AG04449 (cell line): ENCODE measurements at regions of chr6 and their contacts with region 1.

Region 1: DNA sequence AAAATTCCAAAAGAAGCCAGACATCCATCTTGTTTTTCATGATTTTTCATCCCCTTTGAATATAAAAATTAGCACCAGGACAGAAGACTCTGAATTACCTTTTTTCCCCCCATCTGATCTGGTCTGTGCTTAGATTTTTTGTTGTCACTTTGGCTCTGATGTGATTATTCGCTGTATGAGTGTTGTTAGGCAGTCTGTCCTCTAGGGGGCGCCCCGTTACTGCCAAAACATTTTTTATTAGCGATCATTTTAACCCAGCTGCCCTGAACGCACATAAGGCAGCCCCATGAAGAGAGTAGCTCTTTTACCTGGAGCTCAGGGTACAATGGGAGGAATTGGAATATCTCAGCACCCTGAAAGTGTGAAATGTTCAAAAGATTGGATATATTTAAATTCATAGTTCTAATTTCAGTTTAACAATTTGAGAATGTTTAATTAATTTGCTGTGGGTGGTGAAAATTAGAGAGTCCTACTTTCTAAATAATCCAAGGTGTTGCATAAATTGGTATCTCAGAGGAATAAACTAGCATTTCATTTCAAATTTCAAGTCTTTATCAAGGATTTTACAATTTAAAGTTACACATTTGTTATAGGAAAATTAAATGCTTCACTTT is 60.8 kb downstream of the PRPH2 start:
- DNase-seq: peak; percentile 3
- H3K4me3 ChIP-seq: no peak overlapping the region
- CTCF ChIP-seq: peak; percentile 70

Region 2: DNA sequence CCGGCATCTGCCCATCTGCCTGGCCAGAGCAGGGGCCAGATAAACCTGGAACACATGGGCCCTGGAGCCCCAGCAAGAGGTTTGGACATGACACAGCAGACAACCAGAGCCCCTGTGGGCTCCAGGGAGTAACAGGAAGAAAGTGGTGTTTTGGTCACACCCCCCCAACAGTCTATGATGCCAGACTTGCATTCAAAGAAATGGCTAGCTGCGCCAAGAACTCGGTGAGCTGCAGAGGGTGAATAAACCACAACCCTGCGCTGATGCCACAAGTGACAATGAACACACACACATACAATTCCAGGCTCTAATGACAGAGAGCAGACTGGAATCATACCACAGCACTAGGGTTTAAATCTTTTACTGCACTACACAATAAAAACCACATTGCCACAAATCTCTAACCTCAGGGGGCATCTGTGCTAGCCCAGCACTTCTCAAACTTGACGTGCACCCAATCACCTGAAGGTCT is 244.0 kb before region 1 on chr6:
- CTCF ChIA-PET with region 1: no interaction called
- POLR2A ChIA-PET with region 1: no interaction called
- DNase-seq: no peak
- H3K4me3 ChIP-seq: no peak overlapping the region
- CTCF ChIP-seq: no peak

Region 3: DNA sequence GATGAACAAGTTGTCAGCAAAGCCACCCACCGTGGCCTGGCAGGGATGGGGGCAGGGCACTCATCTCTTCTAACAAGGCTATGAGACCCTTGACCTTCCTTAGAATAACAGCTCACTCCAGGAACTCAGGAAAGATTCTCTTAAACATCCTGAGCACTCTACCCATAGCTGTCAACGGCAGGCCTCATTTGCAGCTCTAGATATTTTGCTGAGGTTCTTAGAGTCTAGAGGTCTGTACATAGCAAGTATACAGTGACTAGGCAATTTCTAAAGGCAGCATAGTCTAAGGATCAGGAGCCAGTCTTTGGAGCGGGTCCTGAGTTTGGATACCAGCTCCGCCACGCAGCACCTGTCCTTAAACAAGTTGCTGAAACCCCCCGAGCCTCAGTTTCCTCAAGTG is 221.6 kb before region 1 on chr6:
- CTCF ChIA-PET with region 1: no interaction called
- POLR2A ChIA-PET with region 1: no interaction called
- DNase-seq: no peak
- H3K4me3 ChIP-seq: no peak overlapping the region
- CTCF ChIP-seq: no peak

Region 4: DNA sequence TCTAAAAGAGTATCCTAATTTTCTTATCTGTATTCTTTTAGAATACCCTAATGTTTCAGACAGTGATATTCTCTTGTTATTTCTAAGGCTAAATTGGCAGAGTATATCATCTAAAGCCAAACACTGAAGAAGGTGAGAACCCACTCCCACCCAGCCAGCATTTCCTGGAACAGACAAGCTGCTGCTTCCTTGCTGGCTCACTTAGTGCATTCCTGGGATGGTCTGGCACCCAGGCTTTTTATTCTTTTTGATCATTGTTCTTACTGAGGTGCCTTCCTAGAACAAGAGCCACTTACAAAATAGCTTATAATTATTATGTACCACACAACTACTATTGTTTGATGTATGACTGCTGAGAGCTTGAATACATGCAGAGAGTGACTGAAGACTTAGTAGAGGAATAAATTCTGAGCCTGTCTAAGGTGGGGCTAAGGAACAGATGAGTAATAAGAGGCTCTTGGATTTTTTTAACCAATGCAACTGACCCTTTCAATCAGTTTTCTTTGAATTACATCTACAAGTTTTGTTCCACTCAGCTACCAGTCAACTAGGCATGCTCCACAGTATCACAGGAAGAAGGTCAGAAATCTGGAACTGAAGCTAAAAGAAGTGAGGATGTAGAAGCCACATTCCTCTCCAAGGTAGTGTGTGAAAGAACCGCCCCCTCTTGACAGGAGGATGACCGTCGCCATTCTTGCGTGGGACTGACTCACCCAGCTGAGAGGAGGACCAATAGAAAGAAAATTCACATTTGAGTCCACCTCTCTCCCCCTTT is 30.7 kb after region 1 on chr6:
- CTCF ChIA-PET with region 1: interaction called, 25 read pairs
- POLR2A ChIA-PET with region 1: no interaction called
- DNase-seq: no peak
- H3K4me3 ChIP-seq: no peak overlapping the region
- CTCF ChIP-seq: no peak

Region 5: DNA sequence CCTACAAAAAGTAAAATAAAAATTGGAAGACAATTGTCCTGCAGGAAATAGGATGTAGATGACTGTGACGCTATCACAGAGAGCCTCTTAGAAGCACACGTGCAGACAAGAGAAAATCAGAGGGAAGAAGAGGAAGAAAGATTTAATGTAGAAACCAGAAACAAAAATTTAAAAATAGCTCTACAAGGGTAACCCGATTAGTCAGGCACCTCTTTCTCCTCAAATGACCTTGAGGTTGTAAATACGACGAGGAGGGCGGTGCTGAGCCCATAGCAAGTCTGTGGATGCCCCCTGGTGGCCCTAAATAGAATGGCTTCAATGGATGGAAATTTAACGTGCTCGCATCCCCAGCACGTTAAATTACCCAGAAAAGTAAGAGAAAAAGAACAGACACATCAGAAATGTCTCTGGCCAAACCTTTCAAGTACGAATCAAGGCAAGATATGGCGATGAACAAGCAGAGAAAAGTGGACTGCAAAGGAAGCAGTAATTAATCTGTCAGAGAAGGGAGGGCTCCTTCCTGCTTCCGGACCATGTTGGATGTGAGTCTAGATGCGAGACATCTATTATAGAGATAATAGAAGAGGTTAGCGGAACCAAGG is 64.9 kb after region 1 on chr6:
- CTCF ChIA-PET with region 1: interaction called, 143 read pairs
- POLR2A ChIA-PET with region 1: no interaction called
- DNase-seq: peak; percentile 52
- H3K4me3 ChIP-seq: peak overlapping the region; percentile 34
- CTCF ChIP-seq: peak; percentile 81

Region 6: DNA sequence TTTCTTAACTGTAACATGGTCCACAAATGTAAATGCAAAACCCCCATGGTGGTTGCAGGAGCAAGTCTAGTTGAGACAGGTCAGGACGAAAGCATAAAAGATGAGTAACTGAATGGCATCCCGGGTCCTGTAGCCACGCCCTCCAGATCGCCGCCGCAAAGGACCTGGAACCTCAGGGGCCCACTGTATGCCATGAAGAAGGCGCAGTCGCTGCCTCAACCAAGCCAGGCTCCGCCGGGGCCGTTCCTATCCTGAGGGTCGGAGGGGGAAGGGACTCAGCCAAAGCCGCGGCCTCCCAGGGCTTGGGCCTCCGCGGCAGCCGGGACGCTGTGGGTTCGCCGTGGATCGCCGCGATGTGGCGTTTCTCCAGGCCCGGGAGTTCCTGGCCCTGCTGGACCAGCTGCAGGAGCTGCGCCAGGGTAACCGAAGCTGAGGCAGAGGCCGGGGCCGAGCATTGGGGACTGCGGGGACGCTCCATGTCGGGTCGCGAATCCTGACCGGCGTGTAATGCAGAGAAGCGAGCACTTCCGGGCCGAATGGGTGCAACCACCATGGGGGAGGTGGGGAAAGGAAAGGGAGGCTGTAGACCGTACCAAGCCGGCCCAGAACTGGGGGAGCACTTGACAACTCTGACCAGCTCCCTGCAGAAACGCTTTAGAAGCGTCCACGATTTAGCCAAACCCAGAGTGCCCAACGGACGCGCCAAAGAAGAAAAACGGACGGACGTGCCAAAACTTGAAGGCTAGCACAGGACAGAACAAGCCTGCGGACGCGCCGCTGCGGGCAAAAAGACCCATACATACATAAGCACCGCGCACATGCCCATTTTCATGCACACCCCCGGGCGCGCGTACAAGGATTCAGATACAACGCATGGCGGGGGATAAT is 228.9 kb after region 1 on chr6:
- CTCF ChIA-PET with region 1: interaction called, 20 read pairs
- POLR2A ChIA-PET with region 1: no interaction called
- DNase-seq: peak; percentile 90
- H3K4me3 ChIP-seq: peak overlapping the region; percentile 99
- CTCF ChIP-seq: no peak

Region 7: GRCh38 chr6:42901536-42901957 is 239.9 kb after region 1 on chr6:
- CTCF ChIA-PET with region 1: interaction called, 48 read pairs
- POLR2A ChIA-PET with region 1: no interaction called
- DNase-seq: no peak
- H3K4me3 ChIP-seq: no peak overlapping the region
- CTCF ChIP-seq: peak; percentile 66